Vagina (tissue), 2 donors: ENCODE measurements at regions of chr10 and their contacts with region 1.

Region 1: GRCh38 chr10:4941540-4942330 is 21.5 kb upstream of the AKR1C1 start:
- DNase-seq: no peak
- H3K4me3 ChIP-seq: no peak overlapping the region
- H3K27ac ChIP-seq: peak overlapping the region; percentile 79
- H3K4me1 ChIP-seq: peaks cover 58% of the 10 kb centered on the region
- H3K27me3 ChIP-seq: no peaks in the 10 kb centered on the region
- CTCF ChIP-seq: no peak
- POLR2A ChIP-seq: no peak

Region 2: DNA sequence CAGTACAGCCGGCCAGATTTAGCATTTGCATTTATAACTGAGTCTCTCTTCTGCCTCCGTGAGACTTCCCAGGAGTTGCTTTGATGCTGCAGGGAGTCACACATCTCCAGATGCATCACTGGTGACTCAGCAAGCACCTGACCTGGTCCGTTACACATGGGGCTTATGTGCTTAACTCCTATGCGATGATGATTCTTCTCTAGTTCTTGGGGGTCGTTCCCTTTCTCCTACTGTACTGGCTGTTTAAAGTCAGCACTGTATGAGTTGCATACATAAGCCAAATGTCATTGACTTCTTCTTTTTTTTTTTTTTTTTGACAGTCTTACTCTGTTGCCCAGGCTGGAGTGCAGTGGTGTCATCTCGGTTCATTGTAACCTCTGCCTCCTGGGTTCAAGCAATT is 128.7 kb before region 1 on chr10:
- intact Hi-C with region 1: no loop called
- DNase-seq: no peak
- H3K4me3 ChIP-seq: no peak overlapping the region
- H3K27ac ChIP-seq: no peak overlapping the region
- H3K4me1 ChIP-seq: peaks cover 5% of the 10 kb centered on the region
- H3K27me3 ChIP-seq: no peaks in the 10 kb centered on the region
- CTCF ChIP-seq: no peak
- POLR2A ChIP-seq: no peak

Region 3: GRCh38 chr10:5014936-5015335 is 73.2 kb after region 1 on chr10:
- intact Hi-C with region 1: loop called (anchors 5 kb)
- DNase-seq: no peak
- H3K4me3 ChIP-seq: no peak overlapping the region
- H3K27ac ChIP-seq: no peak overlapping the region
- H3K4me1 ChIP-seq: peaks cover 18% of the 10 kb centered on the region
- H3K27me3 ChIP-seq: no peaks in the 10 kb centered on the region
- CTCF ChIP-seq: no peak
- POLR2A ChIP-seq: no peak

Region 4: DNA sequence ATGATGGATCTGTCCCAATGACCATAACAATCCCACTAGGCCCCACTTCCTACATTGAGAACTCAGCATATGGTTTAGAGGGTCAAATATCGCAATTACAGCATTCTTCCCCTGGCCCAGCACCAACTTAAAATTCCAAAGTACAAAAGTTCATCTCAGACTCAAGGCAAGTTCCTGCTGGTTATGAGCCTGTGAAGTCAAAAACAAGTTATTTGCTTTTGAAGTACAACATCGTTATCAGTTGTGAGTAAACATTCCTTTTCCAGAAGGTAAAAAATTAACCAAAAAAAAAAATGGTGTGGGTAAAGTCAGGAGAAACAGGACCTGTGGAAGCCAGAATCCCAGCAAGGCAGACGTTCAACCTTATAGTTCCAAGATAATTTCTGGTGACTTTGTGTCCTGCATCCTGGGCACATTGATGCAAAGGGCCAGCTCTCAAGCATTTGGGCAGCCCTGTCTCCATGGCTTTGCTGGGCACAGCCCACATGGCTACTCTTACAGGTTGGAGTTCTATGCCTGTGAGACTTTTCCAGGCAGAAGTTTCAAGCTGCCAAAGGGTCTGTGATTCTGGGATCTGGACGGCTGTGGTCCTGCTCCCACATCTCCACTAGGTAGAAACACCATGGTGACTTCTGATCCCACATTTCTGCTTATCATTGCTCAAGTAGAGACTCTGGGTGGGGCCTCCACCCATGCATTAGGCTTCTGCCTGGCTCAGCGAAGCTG is 205.7 kb after region 1 on chr10:
- intact Hi-C with region 1: no loop called
- DNase-seq: no peak
- H3K4me3 ChIP-seq: no peak overlapping the region
- H3K27ac ChIP-seq: no peak overlapping the region
- H3K4me1 ChIP-seq: no peaks in the 10 kb centered on the region
- H3K27me3 ChIP-seq: no peaks in the 10 kb centered on the region
- CTCF ChIP-seq: no peak
- POLR2A ChIP-seq: no peak

Region 5: GRCh38 chr10:5385224-5385623 is 443.5 kb after region 1 on chr10:
- intact Hi-C with region 1: no loop called
- DNase-seq: no peak
- H3K4me3 ChIP-seq: no peak overlapping the region
- H3K27ac ChIP-seq: no peak overlapping the region
- H3K4me1 ChIP-seq: no peaks in the 10 kb centered on the region
- H3K27me3 ChIP-seq: no peaks in the 10 kb centered on the region
- CTCF ChIP-seq: no peak
- POLR2A ChIP-seq: no peak

Region 6: GRCh38 chr10:5446390-5446926 is 504.7 kb after region 1 on chr10:
- intact Hi-C with region 1: no loop called
- DNase-seq: peak in 1 of 2 donors; percentile 96
- H3K4me3 ChIP-seq: peak overlapping the region; percentile 37 to 56
- H3K27ac ChIP-seq: peak overlapping the region; percentile 81
- H3K4me1 ChIP-seq: peaks cover 16% of the 10 kb centered on the region
- H3K27me3 ChIP-seq: no peaks in the 10 kb centered on the region
- CTCF ChIP-seq: no peak
- POLR2A ChIP-seq: peak in 1 of 2 donors; percentile 78